Endothelial cell of umbilical vein (primary cell): ENCODE measurements at regions of chr2 and their contacts with region 1.

Region 1: GRCh38 chr2:180411661-180412060 is 404.6 kb upstream of the CWC22 start:
- DNase-seq: peak; percentile 87
- H3K4me3 ChIP-seq: peak overlapping the region in 1 of 3 experiments; percentile 17
- H3K27ac ChIP-seq: peak overlapping the region; percentile 51
- H3K4me1 ChIP-seq: peaks cover 22% of the 10 kb centered on the region
- H3K27me3 ChIP-seq: no peaks in the 10 kb centered on the region
- CTCF ChIP-seq: no peak
- POLR2A ChIP-seq: no peak

Region 2: GRCh38 chr2:180520206-180520605 is 108.5 kb after region 1 on chr2:
- CTCF ChIA-PET with region 1: interaction called, 3 read pairs
- POLR2A ChIA-PET with region 1: no interaction called
- dilution Hi-C with region 1: no loop called
- intact Hi-C with region 1: loop called (anchors 5 kb)
- DNase-seq: peak; percentile 21
- H3K4me3 ChIP-seq: no peak overlapping the region
- H3K27ac ChIP-seq: no peak overlapping the region
- H3K4me1 ChIP-seq: peaks cover 40% of the 10 kb centered on the region
- H3K27me3 ChIP-seq: no peaks in the 10 kb centered on the region
- CTCF ChIP-seq: no peak
- POLR2A ChIP-seq: no peak